K562 (cell line): ENCODE measurements at regions of chr2 and their contacts with region 1.

Region 1: DNA sequence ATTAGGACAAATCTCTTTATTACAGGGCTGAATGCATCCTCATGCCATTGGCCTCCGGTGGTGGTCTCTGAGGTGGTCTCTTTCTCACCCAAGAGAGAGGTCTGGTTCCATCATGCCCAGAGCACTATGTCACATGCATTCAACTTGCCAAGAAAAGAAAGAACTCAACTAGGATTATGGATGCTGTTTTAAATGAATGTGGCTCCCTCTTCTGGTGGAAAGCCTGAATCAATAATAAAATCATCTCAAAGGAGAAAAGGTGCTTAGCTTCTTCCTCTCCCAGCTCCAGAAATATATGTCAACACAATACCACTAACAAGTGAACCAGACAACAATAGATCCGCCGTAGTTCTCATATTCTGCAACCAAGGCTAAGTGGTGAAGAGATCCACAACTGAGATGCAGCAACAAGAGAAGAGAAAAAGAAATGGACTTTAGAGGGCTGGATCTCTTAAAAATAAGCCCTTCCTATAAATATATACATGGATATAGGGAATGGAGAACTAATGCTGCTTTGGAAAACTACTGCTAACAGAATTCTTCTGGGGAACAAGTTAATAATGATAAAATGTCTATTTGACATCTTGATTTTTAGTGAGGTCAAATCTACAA is 396.8 kb downstream of the NCKAP5 start:
- DNase-seq: peak in 2 of 4 experiments; percentile 8 to 51
- ATAC-seq: no peak
- H3K4me3 ChIP-seq: no peak overlapping the region
- H3K27ac ChIP-seq: no peak overlapping the region
- H3K4me1 ChIP-seq: no peaks in the 10 kb centered on the region
- H3K27me3 ChIP-seq: no peaks in the 10 kb centered on the region
- CTCF ChIP-seq: peak in 2 of 3 experiments; percentile 44 to 59; a peak in 5 of 6 replicates
- EP300 ChIP-seq: no peak
- POLR2A ChIP-seq: no peak
- RAD21 ChIP-seq: peak; percentile 47 to 75

Region 2: GRCh38 chr2:132267105-132267497 is 904.4 kb before region 1 on chr2:
- CTCF ChIA-PET with region 1: no interaction called
- POLR2A ChIA-PET with region 1: no interaction called
- in situ Hi-C with region 1: no loop called
- intact Hi-C with region 1: loop called (anchors 5 kb)
- DNase-seq: no peak
- ATAC-seq: no peak
- H3K4me3 ChIP-seq: no peak overlapping the region
- H3K27ac ChIP-seq: no peak overlapping the region
- H3K4me1 ChIP-seq: no peaks in the 10 kb centered on the region
- H3K27me3 ChIP-seq: peaks cover 0 to 5% of the 10 kb centered on the region in 2 experiments; a peak in 3 of 5 replicates
- CTCF ChIP-seq: no peak
- EP300 ChIP-seq: no peak
- POLR2A ChIP-seq: no peak
- RAD21 ChIP-seq: no peak